Activated CD4-positive, alpha-beta T cell treated with anti-CD3 and anti-CD28 coated beads, Interleukin-2, amount 10 ng/mL, durations not matched to agents 24 days and 14 days (primary cell): ENCODE measurements at regions of chr5 and their contacts with region 1.

Region 1: GRCh38 chr5:55232985-55233928 is at the start of gene CCNO:
- DNase-seq: peak; percentile 90
- H3K4me3 Mint-ChIP-seq: peak within 1 kb of the TSS; percentile 86
- H3K27ac Mint-ChIP-seq: peak within 1 kb of the TSS; percentile 71
- H3K4me1 Mint-ChIP-seq: peaks cover 29% of the 10 kb centered on the region
- H3K27me3 Mint-ChIP-seq: peaks cover 78% of the 10 kb centered on the region
- total RNA-seq, gene CCNO: 0.26 TPM in 1 of 2 replicates, not detected in the other

Region 2: DNA sequence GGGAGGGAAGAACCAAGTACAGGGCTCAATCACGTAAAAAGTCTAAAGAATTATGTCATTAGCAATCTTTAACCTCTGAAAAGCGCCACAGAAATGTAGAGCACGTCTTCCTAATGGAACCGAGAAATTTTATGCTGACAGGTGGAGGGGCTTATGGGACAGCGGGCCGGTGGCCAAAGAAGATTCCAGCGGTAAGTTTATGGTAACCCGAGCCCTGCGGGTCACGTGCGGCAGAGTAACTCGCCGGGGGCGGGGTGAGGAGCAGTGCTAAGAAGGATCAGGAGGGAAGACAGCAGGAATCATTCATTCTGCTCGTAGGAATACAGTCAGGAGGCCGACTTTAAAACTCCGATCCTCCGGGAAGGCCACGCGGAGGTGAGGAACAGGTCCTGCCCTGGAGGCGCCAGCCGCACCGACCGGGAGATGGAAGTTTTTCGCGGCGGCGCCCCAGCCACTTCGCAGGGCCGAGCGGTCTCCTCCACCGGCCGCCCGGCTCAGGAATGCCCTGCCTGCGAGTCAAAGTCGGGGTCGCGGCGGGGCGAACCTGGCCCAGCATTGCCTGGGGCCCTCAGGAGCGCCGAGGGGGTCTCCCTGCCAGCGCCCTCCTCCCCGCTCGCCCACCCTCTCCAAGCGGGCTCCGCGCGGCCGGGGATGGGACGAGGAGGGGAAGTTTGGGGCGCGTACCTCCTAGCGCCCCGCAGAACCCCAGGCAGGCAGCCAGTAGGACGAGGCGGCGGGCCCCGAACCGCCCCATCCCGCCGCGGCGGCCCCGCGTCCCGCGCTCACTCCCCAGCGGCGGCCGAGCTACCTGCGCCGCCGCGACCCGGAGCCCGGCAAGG is 349.7 kb before region 1 on chr5:
- intact Hi-C with region 1: loop called (anchors 5 kb)
- DNase-seq: no peak
- H3K4me3 Mint-ChIP-seq: peak overlapping the region; percentile 76
- H3K27ac Mint-ChIP-seq: no peak overlapping the region
- H3K4me1 Mint-ChIP-seq: peaks cover 7% of the 10 kb centered on the region
- H3K27me3 Mint-ChIP-seq: peaks cover 78% of the 10 kb centered on the region

Region 3: GRCh38 chr5:55222985-55223811 is 10.1 kb before region 1 on chr5:
- intact Hi-C with region 1: loop called (anchors 1 kb)
- DNase-seq: peak; percentile 74
- H3K4me3 Mint-ChIP-seq: peak overlapping the region; percentile 62
- H3K27ac Mint-ChIP-seq: no peak overlapping the region
- H3K4me1 Mint-ChIP-seq: peaks cover 31% of the 10 kb centered on the region
- H3K27me3 Mint-ChIP-seq: peaks cover 84% of the 10 kb centered on the region

Region 4: GRCh38 chr5:55307383-55308253 is 74.4 kb after region 1 on chr5 and contains the starts of genes DHX29 and MTREX:
- intact Hi-C with region 1: loop called (anchors 5 kb)
- DNase-seq: peak; percentile 97
- H3K4me3 Mint-ChIP-seq: no peak within 1 kb of the TSS
- H3K27ac Mint-ChIP-seq: no peak within 1 kb of the TSS
- H3K4me1 Mint-ChIP-seq: peaks cover 22% of the 10 kb centered on the region
- H3K27me3 Mint-ChIP-seq: no peaks in the 10 kb centered on the region
- total RNA-seq, gene DHX29: 18.0 and 18.2 TPM in 2 replicates
- total RNA-seq, gene MTREX: 123 and 128 TPM in 2 replicates